Activated CD8-positive, alpha-beta T cell treated with anti-CD3 and anti-CD28 coated beads for 36 hours (primary cell): ENCODE measurements at regions of chr12 and their contacts with region 1.

Region 1: GRCh38 chr12:59149997-59150642 is 229.8 kb upstream of the LRIG3 start:
- DNase-seq: peak; percentile 5
- ATAC-seq: peak; percentile 77
- H3K4me3 Mint-ChIP-seq: no peak overlapping the region
- H3K27ac Mint-ChIP-seq: no peak overlapping the region
- H3K4me1 Mint-ChIP-seq: no peaks in the 10 kb centered on the region
- H3K27me3 Mint-ChIP-seq: no peaks in the 10 kb centered on the region
- CTCF ChIP-seq: peak; percentile 77

Region 2: GRCh38 chr12:58346032-58346632 is 804.0 kb before region 1 on chr12:
- CTCF ChIA-PET with region 1: interaction called, 3 read pairs
- POLR2A ChIA-PET with region 1: no interaction called
- intact Hi-C with region 1: loop called (anchors 5 kb)
- DNase-seq: no peak
- ATAC-seq: no peak
- H3K4me3 Mint-ChIP-seq: no peak overlapping the region
- H3K27ac Mint-ChIP-seq: no peak overlapping the region
- H3K4me1 Mint-ChIP-seq: no peaks in the 10 kb centered on the region
- H3K27me3 Mint-ChIP-seq: peaks cover 9% of the 10 kb centered on the region
- CTCF ChIP-seq: peak; percentile 78

Region 3: GRCh38 chr12:58920102-58920960 is 229.8 kb before region 1 on chr12 and contains the start of gene LRIG3:
- CTCF ChIA-PET with region 1: no interaction called
- POLR2A ChIA-PET with region 1: no interaction called
- intact Hi-C with region 1: no loop called
- DNase-seq: peak; percentile 17
- ATAC-seq: peak; percentile 20
- H3K4me3 Mint-ChIP-seq: peak within 1 kb of the TSS; percentile 39
- H3K27ac Mint-ChIP-seq: no peak within 1 kb of the TSS
- H3K4me1 Mint-ChIP-seq: peaks cover 2% of the 10 kb centered on the region
- H3K27me3 Mint-ChIP-seq: peaks cover 30% of the 10 kb centered on the region
- CTCF ChIP-seq: no peak
- total RNA-seq, gene LRIG3: not detected

Region 4: GRCh38 chr12:59113831-59114615 is 36.1 kb before region 1 on chr12:
- CTCF ChIA-PET with region 1: interaction called, 7 read pairs
- POLR2A ChIA-PET with region 1: no interaction called
- intact Hi-C with region 1: loop called (anchors 2 kb)
- DNase-seq: peak; percentile 75
- ATAC-seq: peak; percentile 55
- H3K4me3 Mint-ChIP-seq: no peak overlapping the region
- H3K27ac Mint-ChIP-seq: no peak overlapping the region
- H3K4me1 Mint-ChIP-seq: no peaks in the 10 kb centered on the region
- H3K27me3 Mint-ChIP-seq: no peaks in the 10 kb centered on the region
- CTCF ChIP-seq: peak; percentile 68

Region 5: GRCh38 chr12:59134750-59135149 is 15.4 kb before region 1 on chr12:
- CTCF ChIA-PET with region 1: no interaction called
- POLR2A ChIA-PET with region 1: no interaction called
- intact Hi-C with region 1: no loop called
- DNase-seq: no peak
- ATAC-seq: no peak
- H3K4me3 Mint-ChIP-seq: no peak overlapping the region
- H3K27ac Mint-ChIP-seq: no peak overlapping the region
- H3K4me1 Mint-ChIP-seq: no peaks in the 10 kb centered on the region
- H3K27me3 Mint-ChIP-seq: no peaks in the 10 kb centered on the region
- CTCF ChIP-seq: no peak